ENCODE measurements at regions of chr13 and their contacts with region 1.

Region 1: GRCh38 chr13:50123862-50124536 is 108.8 kb downstream of the KCNRG start:
- DNase-seq: peak in 4 of 5 donors; percentile 67 to 93 (median 74)
- H3K4me3 ChIP-seq: peak overlapping the region; percentile 48 to 92
- H3K4me3 Mint-ChIP-seq: peak overlapping the region; percentile 84 to 97 (median 91)
- H3K27ac ChIP-seq: peak overlapping the region; percentile 98
- H3K27ac Mint-ChIP-seq: peak overlapping the region; percentile 94 to 99 (median 97)
- H3K4me1 ChIP-seq: peaks cover 64% of the 10 kb centered on the region
- H3K4me1 Mint-ChIP-seq: peaks cover 36 to 70% (median 55%) of the 10 kb centered on the region in 4 donors
- H3K27me3 ChIP-seq: no peaks in the 10 kb centered on the region
- H3K27me3 Mint-ChIP-seq: peaks cover 3 to 10% of the 10 kb centered on the region in 2 donors

Region 2: DNA sequence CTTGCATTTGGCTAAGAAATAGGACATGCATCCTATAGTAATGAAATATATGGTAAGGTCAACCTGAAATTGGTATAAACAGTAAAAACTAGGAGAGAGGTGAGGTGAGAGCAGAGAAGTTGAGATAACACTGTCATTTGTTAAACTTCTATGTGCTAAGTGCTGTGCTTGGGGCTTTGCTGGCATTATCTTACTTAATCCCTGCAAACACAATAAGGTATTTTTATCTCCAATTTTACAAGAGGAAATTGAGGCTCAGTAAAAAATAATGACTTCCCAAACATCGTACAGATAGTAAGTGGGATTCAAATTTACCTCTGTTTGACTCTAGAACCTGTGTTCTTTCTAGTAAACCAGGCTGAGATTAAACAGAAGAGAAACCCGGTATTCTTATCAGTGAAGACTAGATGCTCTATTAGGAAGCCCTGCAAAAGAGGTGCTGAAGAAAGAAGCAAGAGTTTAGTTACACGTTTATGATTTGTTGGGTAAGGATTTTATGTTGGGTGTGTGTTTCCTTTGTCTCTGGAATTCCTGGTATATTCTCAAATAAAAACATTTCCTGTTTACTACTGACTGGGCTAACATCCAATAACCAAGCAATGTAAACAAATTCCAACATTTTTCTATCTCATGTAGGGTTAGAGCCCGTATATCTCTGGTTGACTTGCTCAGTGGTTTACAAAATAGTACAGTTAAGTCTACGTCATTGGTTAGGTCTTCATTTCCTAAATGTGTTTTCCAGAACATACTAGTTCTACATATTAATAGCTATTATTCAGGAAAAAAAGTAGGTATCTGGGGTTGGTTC is 1285.6 kb before region 1 on chr13:
- CTCF ChIA-PET with region 1: no interaction called
- POLR2A ChIA-PET with region 1: no interaction called
- intact Hi-C with region 1: no loop called
- DNase-seq: no peak
- H3K4me3 ChIP-seq: no peak overlapping the region
- H3K4me3 Mint-ChIP-seq: peak overlapping the region in 1 of 8 donors; percentile 9
- H3K27ac ChIP-seq: no peak overlapping the region
- H3K27ac Mint-ChIP-seq: no peak overlapping the region
- H3K4me1 ChIP-seq: no peaks in the 10 kb centered on the region
- H3K4me1 Mint-ChIP-seq: peaks cover 0 to 3% (median under 1%) of the 10 kb centered on the region in 4 donors
- H3K27me3 ChIP-seq: no peaks in the 10 kb centered on the region
- H3K27me3 Mint-ChIP-seq: no peaks in the 10 kb centered on the region

Region 3: GRCh38 chr13:49936085-49936940 is 187.7 kb before region 1 on chr13 and contains the start of gene SPRYD7:
- CTCF ChIA-PET with region 1: no interaction called
- POLR2A ChIA-PET with region 1: interaction called, 23 read pairs
- intact Hi-C with region 1: loop called (anchors 1 kb)
- DNase-seq: peak; percentile 89 to 92 (median 92)
- H3K4me3 ChIP-seq: peak within 1 kb of the TSS; percentile 66 to 96
- H3K4me3 Mint-ChIP-seq: peak within 1 kb of the TSS; percentile 91 to 97 (median 95)
- H3K27ac ChIP-seq: peak within 1 kb of the TSS; percentile 63
- H3K27ac Mint-ChIP-seq: peak within 1 kb of the TSS; percentile 85 to 97 (median 94)
- H3K4me1 ChIP-seq: peaks cover 19% of the 10 kb centered on the region
- H3K4me1 Mint-ChIP-seq: peaks cover 12 to 23% (median 15%) of the 10 kb centered on the region in 4 donors
- H3K27me3 ChIP-seq: no peaks in the 10 kb centered on the region
- H3K27me3 Mint-ChIP-seq: no peaks in the 10 kb centered on the region
- total RNA-seq, gene SPRYD7: 3.3 to 5.1 TPM

Region 4: GRCh38 chr13:50098693-50099092 is 25.3 kb before region 1 on chr13:
- CTCF ChIA-PET with region 1: interaction called, 3 read pairs
- POLR2A ChIA-PET with region 1: interaction called, 14 read pairs
- intact Hi-C with region 1: no loop called
- DNase-seq: no peak
- H3K4me3 ChIP-seq: no peak overlapping the region
- H3K4me3 Mint-ChIP-seq: peak overlapping the region in 1 of 8 donors; percentile 10
- H3K27ac ChIP-seq: no peak overlapping the region
- H3K27ac Mint-ChIP-seq: peak overlapping the region in 2 of 7 donors; percentile 6 to 10
- H3K4me1 ChIP-seq: peaks cover 4% of the 10 kb centered on the region
- H3K4me1 Mint-ChIP-seq: peaks cover 13 to 44% (median 29%) of the 10 kb centered on the region in 4 donors
- H3K27me3 ChIP-seq: no peaks in the 10 kb centered on the region
- H3K27me3 Mint-ChIP-seq: no peaks in the 10 kb centered on the region

Region 5: GRCh38 chr13:50189450-50189849 is 65.5 kb after region 1 on chr13:
- CTCF ChIA-PET with region 1: interaction called, 4 read pairs
- POLR2A ChIA-PET with region 1: interaction called, 14 read pairs
- intact Hi-C with region 1: no loop called
- DNase-seq: peak in 2 of 5 donors; percentile 6 to 20
- H3K4me3 ChIP-seq: no peak overlapping the region
- H3K4me3 Mint-ChIP-seq: peak overlapping the region in 4 of 8 donors; percentile 0 to 20 (median 4)
- H3K27ac ChIP-seq: no peak overlapping the region
- H3K27ac Mint-ChIP-seq: peak overlapping the region in 3 of 7 donors; percentile 8 to 58 (median 36)
- H3K4me1 ChIP-seq: peaks cover 35% of the 10 kb centered on the region
- H3K4me1 Mint-ChIP-seq: peaks cover 11 to 72% (median 31%) of the 10 kb centered on the region in 4 donors
- H3K27me3 ChIP-seq: no peaks in the 10 kb centered on the region
- H3K27me3 Mint-ChIP-seq: no peaks in the 10 kb centered on the region

Region 6: GRCh38 chr13:50268500-50268899 is 144.5 kb after region 1 on chr13:
- CTCF ChIA-PET with region 1: interaction called, 3 read pairs
- POLR2A ChIA-PET with region 1: interaction called, 15 read pairs
- intact Hi-C with region 1: no loop called
- DNase-seq: no peak
- H3K4me3 ChIP-seq: no peak overlapping the region
- H3K4me3 Mint-ChIP-seq: no peak overlapping the region
- H3K27ac ChIP-seq: no peak overlapping the region
- H3K27ac Mint-ChIP-seq: peak overlapping the region in 1 of 7 donors; percentile 42
- H3K4me1 ChIP-seq: no peaks in the 10 kb centered on the region
- H3K4me1 Mint-ChIP-seq: peaks cover 0 to 7% (median 2%) of the 10 kb centered on the region in 4 donors
- H3K27me3 ChIP-seq: no peaks in the 10 kb centered on the region
- H3K27me3 Mint-ChIP-seq: no peaks in the 10 kb centered on the region

Region 7: DNA sequence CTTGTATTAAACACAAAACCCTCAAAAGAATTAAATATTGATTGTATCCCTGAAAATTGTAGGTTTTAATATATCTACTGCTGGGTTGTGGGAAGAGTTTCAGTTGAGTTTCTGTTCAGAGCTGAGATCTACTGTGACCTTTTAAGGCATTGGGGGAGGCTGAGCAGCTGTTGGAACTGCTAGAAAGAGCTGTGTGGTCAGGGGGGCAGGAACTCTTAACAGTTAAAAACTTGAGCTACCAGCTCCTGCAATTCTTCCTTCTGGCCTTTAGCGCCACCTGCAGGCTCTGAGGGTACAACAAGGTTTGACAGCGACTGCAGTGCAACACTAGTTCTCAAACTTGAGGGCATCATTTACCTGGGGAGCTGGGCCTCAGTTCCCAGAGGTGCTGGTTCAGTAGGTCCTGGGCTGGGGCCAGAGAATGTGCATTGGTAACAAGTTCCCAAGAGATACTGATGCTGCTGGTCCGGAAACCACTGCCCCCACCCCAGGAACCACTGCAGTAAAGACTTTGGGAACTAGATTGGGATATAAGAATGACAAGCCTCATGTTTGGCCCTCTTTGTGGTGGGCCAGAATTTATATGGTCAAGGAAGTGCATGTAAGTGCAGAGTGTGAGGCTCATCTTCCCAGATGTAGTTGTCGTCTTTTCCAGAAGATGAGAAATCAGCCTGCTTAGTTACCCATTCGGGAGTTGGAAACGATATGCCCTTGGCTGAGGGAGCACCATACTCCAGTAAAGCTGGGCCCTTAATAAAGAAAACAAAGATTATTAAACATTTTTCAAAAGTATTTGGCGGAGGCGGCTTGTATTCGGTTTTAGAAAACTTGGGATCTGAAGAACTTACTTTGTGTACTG is 788.2 kb after region 1 on chr13:
- CTCF ChIA-PET with region 1: interaction called, 12 read pairs
- POLR2A ChIA-PET with region 1: interaction called, 115 read pairs
- intact Hi-C with region 1: loop called (anchors 1 kb)
- DNase-seq: peak; percentile 82 to 90 (median 83)
- H3K4me3 ChIP-seq: peak overlapping the region; percentile 73 to 92
- H3K4me3 Mint-ChIP-seq: peak overlapping the region; percentile 82 to 98 (median 94)
- H3K27ac ChIP-seq: peak overlapping the region; percentile 79
- H3K27ac Mint-ChIP-seq: peak overlapping the region; percentile 89 to 98 (median 95)
- H3K4me1 ChIP-seq: peaks cover 69% of the 10 kb centered on the region
- H3K4me1 Mint-ChIP-seq: peaks cover 43 to 59% (median 50%) of the 10 kb centered on the region in 4 donors
- H3K27me3 ChIP-seq: no peaks in the 10 kb centered on the region
- H3K27me3 Mint-ChIP-seq: peaks cover 0 to under 1% of the 10 kb centered on the region in 2 donors